Gastrocnemius medialis (tissue), 4 donors: ENCODE measurements at regions of chr1 and their contacts with region 1.

Region 1: GRCh38 chr1:54070171-54070837 is 16.9 kb downstream of the TCEANC2 start:
- DNase-seq: no peak
- ATAC-seq: peak; percentile 83 to 84
- H3K4me3 ChIP-seq: no peak overlapping the region
- H3K27ac ChIP-seq: no peak overlapping the region
- H3K4me1 ChIP-seq: no peaks in the 10 kb centered on the region
- H3K27me3 ChIP-seq: no peaks in the 10 kb centered on the region
- CTCF ChIP-seq: peak; percentile 40 to 72 (median 66)
- POLR2A ChIP-seq: no peak

Region 2: GRCh38 chr1:53600561-53600960 is 469.7 kb before region 1 on chr1:
- in situ Hi-C with region 1: no loop called
- intact Hi-C with region 1: no loop called
- DNase-seq: no peak
- ATAC-seq: no peak
- H3K4me3 ChIP-seq: no peak overlapping the region
- H3K27ac ChIP-seq: no peak overlapping the region
- H3K4me1 ChIP-seq: no peaks in the 10 kb centered on the region
- H3K27me3 ChIP-seq: no peaks in the 10 kb centered on the region
- CTCF ChIP-seq: no peak
- POLR2A ChIP-seq: no peak

Region 3: GRCh38 chr1:54499360-54500106 is 429.2 kb after region 1 on chr1:
- in situ Hi-C with region 1: loop called in 1 of 4 experiments (anchors 10 kb)
- intact Hi-C with region 1: no loop called
- DNase-seq: no peak
- ATAC-seq: no peak
- H3K4me3 ChIP-seq: peak overlapping the region; percentile 33 to 60 (median 41)
- H3K27ac ChIP-seq: no peak overlapping the region
- H3K4me1 ChIP-seq: peaks cover 5 to 6% of the 10 kb centered on the region in 2 donors
- H3K27me3 ChIP-seq: peaks cover 0 to 21% (median 6%) of the 10 kb centered on the region in 3 donors
- CTCF ChIP-seq: peak in 2 of 5 experiments; percentile 29 to 31
- POLR2A ChIP-seq: no peak